Activated CD4-positive, alpha-beta memory T cell treated with anti-CD3 and anti-CD28 coated beads for 36 hours (primary cell): ENCODE measurements at regions of chr4 and their contacts with region 1.

Region 1: GRCh38 chr4:142331132-142331531 is 515.0 kb downstream of the INPP4B start:
- DNase-seq: no peak
- H3K4me3 Mint-ChIP-seq: no peak overlapping the region
- H3K27ac Mint-ChIP-seq: peak overlapping the region; percentile 30
- H3K4me1 Mint-ChIP-seq: peaks cover 74% of the 10 kb centered on the region
- H3K27me3 Mint-ChIP-seq: no peaks in the 10 kb centered on the region

Region 2: DNA sequence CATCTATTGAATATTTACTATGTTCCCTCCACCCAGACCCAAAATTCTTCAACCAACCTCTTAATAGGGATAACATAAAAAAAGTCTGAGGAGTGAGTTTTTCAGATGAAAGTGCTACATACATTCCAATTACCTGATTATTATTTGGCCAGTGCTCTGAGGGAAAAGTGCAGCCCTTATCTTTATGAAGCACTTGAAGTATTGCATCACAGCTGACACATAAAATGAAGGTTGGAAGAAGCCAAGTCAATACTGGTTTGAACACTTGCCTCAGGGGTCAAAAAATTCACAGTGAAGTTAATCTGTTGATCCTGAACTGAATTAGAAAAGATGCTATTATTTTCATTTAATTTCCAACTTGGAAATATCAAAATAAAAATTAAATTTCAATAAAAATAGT is 16.1 kb after region 1 on chr4:
- CTCF ChIA-PET with region 1: interaction called, 10 read pairs
- POLR2A ChIA-PET with region 1: no interaction called
- intact Hi-C with region 1: loop called (anchors 2 kb)
- DNase-seq: no peak
- H3K4me3 Mint-ChIP-seq: peak overlapping the region; percentile 44
- H3K27ac Mint-ChIP-seq: peak overlapping the region; percentile 64
- H3K4me1 Mint-ChIP-seq: peaks cover 86% of the 10 kb centered on the region
- H3K27me3 Mint-ChIP-seq: no peaks in the 10 kb centered on the region

Region 3: DNA sequence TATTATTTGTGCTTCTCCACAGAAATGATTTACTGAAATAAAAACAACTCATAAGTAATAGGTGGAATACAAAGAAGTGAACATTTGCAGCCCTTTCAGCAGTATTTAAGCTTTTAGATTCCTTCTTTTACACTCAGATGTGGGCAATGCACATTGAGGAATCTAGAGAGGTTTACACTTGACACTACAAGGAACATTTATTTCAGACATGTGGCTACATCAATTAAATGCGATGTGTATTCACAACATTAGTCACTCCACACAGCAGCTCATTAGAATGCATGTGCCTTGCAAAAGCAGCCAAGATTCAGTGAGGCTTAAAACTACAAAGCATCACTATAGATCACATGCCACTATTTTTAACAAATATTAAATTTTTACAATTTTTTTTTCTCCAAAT is 34.3 kb after region 1 on chr4:
- CTCF ChIA-PET with region 1: no interaction called
- POLR2A ChIA-PET with region 1: no interaction called
- intact Hi-C with region 1: no loop called
- DNase-seq: no peak
- H3K4me3 Mint-ChIP-seq: no peak overlapping the region
- H3K27ac Mint-ChIP-seq: peak overlapping the region; percentile 77
- H3K4me1 Mint-ChIP-seq: peaks cover 73% of the 10 kb centered on the region
- H3K27me3 Mint-ChIP-seq: no peaks in the 10 kb centered on the region

Region 4: GRCh38 chr4:143728166-143728565 is 1397.0 kb after region 1 on chr4:
- CTCF ChIA-PET with region 1: no interaction called
- POLR2A ChIA-PET with region 1: no interaction called
- intact Hi-C with region 1: no loop called
- DNase-seq: no peak
- H3K4me3 Mint-ChIP-seq: no peak overlapping the region
- H3K27ac Mint-ChIP-seq: no peak overlapping the region
- H3K4me1 Mint-ChIP-seq: no peaks in the 10 kb centered on the region
- H3K27me3 Mint-ChIP-seq: no peaks in the 10 kb centered on the region